ENCODE measurements at regions of chr1 and their contacts with region 1.

Region 1: DNA sequence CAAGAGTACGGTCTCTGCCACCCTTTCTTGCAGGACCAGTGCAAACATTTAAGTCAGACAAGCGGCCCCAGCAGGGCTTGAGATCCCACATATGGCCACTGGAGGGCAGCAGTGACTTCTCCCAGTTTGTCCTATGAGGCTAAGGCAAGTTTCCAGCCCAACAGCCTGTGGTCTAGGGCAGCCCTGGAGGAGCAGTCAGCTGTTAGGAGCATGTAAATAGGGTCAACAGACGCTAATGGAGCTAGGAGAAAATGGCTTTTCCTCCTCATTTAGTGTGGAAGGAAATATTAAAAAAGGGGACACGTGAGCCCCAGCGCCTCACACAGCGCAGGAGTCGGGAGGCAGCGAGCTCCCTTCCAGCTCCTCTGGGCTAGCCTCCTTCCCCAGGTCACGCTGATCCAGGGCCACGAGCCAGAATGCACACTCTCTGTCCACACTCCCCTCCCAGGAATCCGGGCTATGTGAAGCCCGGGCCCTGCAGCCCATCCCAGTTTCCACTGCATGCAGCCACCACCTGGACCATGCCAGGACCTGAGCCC is 95.6 kb downstream of the LAMC2 start:
- DNase-seq: peak; percentile 91
- H3K4me3 Mint-ChIP-seq: no peak overlapping the region
- H3K27ac Mint-ChIP-seq: no peak overlapping the region
- H3K4me1 Mint-ChIP-seq: peaks cover 6% of the 10 kb centered on the region
- H3K27me3 Mint-ChIP-seq: peaks cover 3% of the 10 kb centered on the region

Region 2: GRCh38 chr1:183543619-183544204 is 262.1 kb after region 1 on chr1:
- intact Hi-C with region 1: loop called (anchors 2 kb)
- DNase-seq: peak; percentile 77
- H3K4me3 Mint-ChIP-seq: no peak overlapping the region
- H3K27ac Mint-ChIP-seq: peak overlapping the region; percentile 12
- H3K4me1 Mint-ChIP-seq: peaks cover 12% of the 10 kb centered on the region
- H3K27me3 Mint-ChIP-seq: no peaks in the 10 kb centered on the region

Region 3: GRCh38 chr1:183622884-183623785 is 341.5 kb after region 1 on chr1:
- intact Hi-C with region 1: loop called (anchors 1 kb)
- DNase-seq: peak; percentile 86
- H3K4me3 Mint-ChIP-seq: no peak overlapping the region
- H3K27ac Mint-ChIP-seq: peak overlapping the region; percentile 2
- H3K4me1 Mint-ChIP-seq: peaks cover 10% of the 10 kb centered on the region
- H3K27me3 Mint-ChIP-seq: no peaks in the 10 kb centered on the region

Region 4: GRCh38 chr1:183685112-183685713 is 403.6 kb after region 1 on chr1:
- intact Hi-C with region 1: loop called (anchors 10 kb)
- DNase-seq: peak; percentile 78
- H3K4me3 Mint-ChIP-seq: no peak overlapping the region
- H3K27ac Mint-ChIP-seq: no peak overlapping the region
- H3K4me1 Mint-ChIP-seq: peaks cover 11% of the 10 kb centered on the region
- H3K27me3 Mint-ChIP-seq: peaks cover 30% of the 10 kb centered on the region

Measured in activated CD4-positive, alpha-beta T cell treated with anti-CD3 and anti-CD28 coated beads, Interleukin-2, amount 10 ng/mL, durations not matched to agents 24 days and 14 days (primary cell).